RWPE1 (cell line): ENCODE measurements at regions of chr1 and their contacts with region 1.

Region 1: DNA sequence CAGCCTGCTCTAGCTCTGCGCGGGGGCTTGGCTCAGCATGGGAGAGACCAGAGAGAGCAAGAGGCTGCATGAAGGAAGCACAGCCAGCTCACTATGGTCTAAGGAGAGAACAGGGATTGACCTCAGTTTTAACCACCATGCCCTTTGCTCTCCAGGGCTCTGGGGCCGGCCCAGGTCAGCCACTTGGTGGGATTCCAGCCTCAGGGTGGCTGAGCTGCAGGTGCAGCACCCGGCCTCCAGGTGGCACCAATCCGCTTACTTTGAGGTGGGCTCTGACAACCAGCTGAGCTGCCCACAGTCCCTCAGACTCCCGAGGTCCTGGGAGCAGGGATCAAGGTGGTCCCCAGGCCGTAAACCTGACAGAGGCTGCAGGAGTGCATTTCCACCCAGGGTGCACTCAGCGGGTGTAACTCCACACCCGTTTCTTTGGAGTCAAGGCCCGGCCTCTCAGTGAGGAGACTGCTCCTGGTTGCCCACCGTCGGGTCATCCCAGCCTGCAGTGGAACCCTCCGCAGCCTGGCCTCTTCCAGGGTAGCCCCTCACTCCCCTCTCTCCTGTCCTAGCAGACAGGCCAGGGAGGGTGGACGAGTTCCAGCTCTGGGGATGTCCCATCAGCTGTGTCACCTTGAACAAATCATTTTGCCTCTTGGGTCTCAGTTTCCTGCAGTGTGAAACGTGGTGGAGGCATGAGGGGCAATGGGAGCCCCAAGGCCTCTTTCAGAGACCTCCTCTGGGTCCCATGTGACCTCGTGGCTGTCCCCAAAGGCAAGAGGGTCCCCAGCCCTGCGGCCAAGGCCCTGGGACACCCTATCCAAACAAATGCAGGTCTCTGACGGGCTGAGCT is 607 bp upstream of the LGR6 start:
- DNase-seq: peak; percentile 67
- H3K27ac ChIP-seq: peak overlapping the region; percentile 39
- CTCF ChIP-seq: peak; percentile 89

Region 2: GRCh38 chr1:202144402-202145067 is 48.5 kb before region 1 on chr1 and contains the start of gene ARL8A:
- CTCF ChIA-PET with region 1: no interaction called
- POLR2A ChIA-PET with region 1: no interaction called
- DNase-seq: peak; percentile 73
- H3K27ac ChIP-seq: peak within 1 kb of the TSS; percentile 81
- CTCF ChIP-seq: no peak

Region 3: GRCh38 chr1:202176949-202177927 is 15.8 kb before region 1 on chr1:
- CTCF ChIA-PET with region 1: interaction called, 17 read pairs
- POLR2A ChIA-PET with region 1: no interaction called
- DNase-seq: no peak
- H3K27ac ChIP-seq: no peak overlapping the region
- CTCF ChIP-seq: no peak

Region 4: GRCh38 chr1:202221911-202222909 is 29.2 kb after region 1 on chr1:
- CTCF ChIA-PET with region 1: interaction called, 10 read pairs
- POLR2A ChIA-PET with region 1: interaction called, 3 read pairs
- DNase-seq: peak; percentile 96
- H3K27ac ChIP-seq: peak overlapping the region; percentile 89
- CTCF ChIP-seq: no peak

Region 5: GRCh38 chr1:202274611-202275010 is 81.6 kb after region 1 on chr1:
- CTCF ChIA-PET with region 1: interaction called, 19 read pairs
- POLR2A ChIA-PET with region 1: no interaction called
- DNase-seq: no peak
- H3K27ac ChIP-seq: no peak overlapping the region
- CTCF ChIP-seq: no peak

Region 6: GRCh38 chr1:202304375-202304774 is 111.4 kb after region 1 on chr1:
- CTCF ChIA-PET with region 1: interaction called, 20 read pairs
- POLR2A ChIA-PET with region 1: no interaction called
- DNase-seq: no peak
- H3K27ac ChIP-seq: no peak overlapping the region
- CTCF ChIP-seq: no peak

Region 7: DNA sequence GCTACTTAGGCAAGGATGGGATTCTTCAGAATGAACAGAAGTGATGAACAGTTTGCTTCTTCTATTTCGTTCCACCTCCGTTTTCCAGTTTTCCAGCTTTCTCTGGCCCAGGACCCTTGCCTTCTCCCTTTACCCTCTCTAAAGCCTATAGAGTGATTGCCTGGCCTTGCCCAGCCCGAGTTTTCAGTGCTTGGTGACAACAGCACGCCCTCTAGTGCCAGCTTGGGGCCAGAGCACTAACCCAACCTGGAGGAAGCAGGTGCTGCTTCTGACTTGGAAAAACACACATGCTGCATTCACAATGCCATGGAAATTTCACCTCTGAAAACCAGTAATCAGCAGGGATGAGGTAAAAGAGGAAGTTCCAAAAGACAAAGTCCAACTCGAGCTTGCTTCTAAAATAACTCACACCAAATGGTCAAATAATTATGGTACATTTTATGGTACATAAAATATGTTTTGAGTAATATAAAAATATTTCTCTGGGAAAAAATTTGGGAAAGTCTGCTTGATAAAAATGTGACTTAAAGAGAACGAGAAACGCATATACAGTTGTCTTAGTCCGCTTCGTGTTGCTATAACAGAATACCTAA is 122.7 kb after region 1 on chr1:
- CTCF ChIA-PET with region 1: interaction called, 52 read pairs
- POLR2A ChIA-PET with region 1: no interaction called
- DNase-seq: peak; percentile 92
- H3K27ac ChIP-seq: no peak overlapping the region
- CTCF ChIP-seq: peak; percentile 97